ENCODE measurements at regions of chr15 and their contacts with region 1.

Region 1: DNA sequence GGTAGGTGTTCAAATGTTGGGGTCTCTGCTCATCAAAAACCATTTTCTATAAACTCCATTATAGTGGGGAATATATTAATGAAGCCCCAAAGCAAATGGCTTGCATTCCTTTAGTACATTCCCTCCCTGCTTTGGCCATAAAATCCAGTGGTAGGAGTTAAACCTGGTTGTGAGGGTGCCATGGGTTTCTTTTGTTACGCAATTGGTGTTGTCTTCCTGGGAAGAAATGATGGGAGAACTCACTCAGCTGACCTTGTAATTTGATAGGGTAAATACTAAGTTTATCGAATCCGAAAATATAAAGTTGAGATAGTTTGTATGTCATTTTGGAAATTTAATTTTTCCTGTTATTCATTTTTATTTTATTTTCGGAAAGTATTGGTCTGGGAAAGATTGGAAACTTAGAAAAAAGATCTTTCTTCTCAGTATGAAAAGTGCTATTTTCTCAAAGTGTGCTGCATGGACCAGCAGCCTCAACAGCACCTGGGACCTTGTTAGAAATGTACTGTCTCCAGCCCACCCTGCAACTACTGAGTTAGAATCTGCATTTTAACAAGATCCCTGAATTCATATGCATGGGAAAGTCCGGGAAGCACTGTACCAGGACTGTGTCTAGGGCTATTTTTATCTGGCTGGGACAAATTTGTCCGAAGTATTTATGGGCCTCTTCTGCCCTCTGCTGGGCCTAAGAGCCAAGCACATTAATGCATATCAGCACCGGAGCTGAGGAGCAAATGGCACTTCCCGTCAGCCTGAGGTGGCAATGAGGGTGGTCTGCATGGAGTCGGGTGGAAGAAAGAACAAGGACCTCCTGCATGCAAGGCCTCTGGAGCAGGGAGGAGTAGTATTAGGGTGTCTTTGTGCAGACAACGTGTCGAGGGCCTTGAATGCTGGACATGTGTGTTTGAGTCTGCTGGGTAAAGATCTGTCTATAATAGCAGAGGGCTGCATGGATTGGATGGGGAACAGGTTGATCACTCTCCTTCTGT is 54.7 kb downstream of the FAM81A start:
- DNase-seq: peak; percentile 44
- CTCF ChIP-seq: peak; percentile 86

Region 2: DNA sequence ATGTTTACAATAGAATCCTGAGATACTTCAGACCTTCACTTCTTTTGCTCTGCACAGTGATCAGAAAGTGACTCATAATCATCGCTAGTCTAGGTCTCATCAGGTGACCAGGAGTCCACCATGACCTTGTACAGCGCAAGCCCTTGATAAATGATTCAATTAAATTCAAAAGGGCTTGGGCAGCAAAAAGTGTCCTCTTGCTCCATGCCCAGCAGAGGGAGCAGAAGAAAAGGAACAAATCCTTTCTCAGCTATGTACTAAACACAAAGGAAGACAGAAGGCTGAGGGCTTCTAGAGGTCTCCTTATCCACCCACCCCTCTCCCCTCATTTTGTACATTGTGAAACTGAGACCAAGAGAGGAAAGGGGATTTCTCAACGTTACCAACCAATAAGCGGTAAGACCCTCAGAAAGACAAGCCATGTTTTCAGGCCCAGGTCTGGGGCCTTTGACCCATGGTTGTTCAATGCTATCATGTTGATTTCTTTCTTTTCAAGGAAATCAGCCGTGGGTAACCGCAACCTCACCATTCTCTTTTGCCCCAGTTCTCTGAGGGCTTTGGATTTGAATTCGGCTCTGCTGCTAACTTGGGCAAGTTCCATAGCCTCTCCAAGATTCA is 1279.7 kb before region 1 on chr15:
- in situ Hi-C with region 1: loop called (anchors 25 kb)
- DNase-seq: peak; percentile 22
- CTCF ChIP-seq: peak; percentile 17

Region 3: DNA sequence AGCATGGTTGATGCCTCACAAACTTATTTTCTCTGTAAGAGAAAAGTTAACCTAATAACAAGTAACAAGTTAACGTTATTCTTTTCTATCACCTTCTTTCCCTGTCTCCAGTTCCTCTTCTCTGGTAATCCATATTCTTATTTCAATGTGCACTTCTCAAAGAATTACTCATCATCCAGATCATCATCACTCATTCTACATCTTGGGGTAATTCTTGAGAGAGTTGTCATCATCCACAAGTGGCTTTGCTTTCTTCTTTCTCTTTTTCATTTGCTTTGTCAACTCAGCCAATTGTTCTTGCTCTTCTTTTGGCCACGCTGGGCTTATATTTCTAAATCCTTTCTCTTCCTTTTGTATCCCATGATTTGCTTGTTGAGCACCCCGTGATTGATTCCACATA is 526.0 kb before region 1 on chr15:
- in situ Hi-C with region 1: loop called (anchors 10 kb)
- DNase-seq: no peak
- CTCF ChIP-seq: no peak

Region 4: DNA sequence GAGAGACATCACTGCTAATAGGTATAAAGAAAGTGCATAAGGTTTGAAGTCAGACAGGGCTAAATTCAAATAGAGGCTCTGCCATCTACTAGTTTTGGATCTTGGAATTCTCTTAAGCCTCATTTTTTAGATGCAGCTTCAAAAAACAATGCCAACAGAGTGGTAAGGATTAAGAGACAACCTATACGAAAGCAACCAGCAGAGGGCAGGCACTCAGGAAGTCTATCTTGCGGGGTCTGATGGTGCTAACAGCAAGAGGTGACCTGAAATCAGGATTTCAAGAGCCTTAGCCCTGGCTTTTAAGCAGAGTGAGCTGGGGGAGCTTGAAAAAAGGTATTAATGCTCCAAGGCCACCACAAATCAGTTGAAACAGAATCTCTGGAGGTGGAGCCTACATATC is 245.3 kb before region 1 on chr15:
- in situ Hi-C with region 1: loop called (anchors 25 kb)
- DNase-seq: no peak
- CTCF ChIP-seq: peak; percentile 67

Region 5: GRCh38 chr15:59532770-59533379 is 40.2 kb after region 1 on chr15:
- in situ Hi-C with region 1: no loop called
- DNase-seq: peak; percentile 26
- CTCF ChIP-seq: peak; percentile 66

Region 6: DNA sequence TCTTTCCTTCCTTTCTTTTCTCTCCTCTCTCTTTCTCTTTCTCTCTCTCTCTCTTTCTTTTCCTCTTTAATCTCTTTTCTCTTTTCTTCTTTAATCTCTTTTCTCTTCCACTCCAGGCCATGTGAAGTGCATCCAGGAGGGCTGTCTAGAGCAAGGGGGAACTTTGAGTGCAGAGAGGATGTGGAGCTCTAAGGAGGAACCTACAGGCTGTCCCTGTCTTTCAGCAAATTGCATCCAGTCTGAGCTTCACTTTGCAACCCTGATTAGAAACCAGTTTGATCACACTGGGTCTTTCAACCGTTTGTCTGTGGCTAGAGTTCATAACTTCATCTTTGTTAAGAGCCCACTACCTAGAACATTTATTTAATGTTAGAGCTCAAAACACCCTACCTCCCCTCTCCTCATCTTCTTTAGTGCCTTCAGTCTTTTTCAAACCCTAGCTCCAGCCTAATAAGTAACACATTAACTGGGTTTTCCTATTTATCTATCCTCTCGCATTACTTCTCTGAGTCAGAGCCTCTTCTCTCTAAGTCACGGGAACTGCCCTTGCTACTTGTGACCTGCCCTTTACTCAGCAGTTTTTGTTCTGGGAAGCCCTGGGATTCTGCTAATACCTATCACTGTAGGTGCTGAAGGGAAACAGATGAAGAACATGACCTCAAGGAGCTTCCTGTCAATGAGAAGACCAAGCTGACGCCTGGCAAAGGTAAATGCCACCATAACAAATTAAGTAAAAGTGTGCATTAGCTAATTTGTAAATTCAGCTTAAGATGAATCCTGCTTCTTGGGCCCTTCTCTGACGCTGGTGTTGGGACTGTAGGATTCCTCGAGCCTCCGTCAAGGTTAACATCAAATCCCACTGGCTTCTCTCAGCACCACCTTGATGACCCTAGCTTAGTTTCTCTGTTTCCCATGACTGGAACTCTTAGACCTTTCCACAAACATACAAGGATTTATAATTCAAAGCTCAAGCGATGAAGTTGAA is 118.9 kb after region 1 on chr15 and contains the start of gene GCNT3:
- in situ Hi-C with region 1: no loop called
- DNase-seq: peak; percentile 23
- CTCF ChIP-seq: no peak

Measured in GM13977 (cell line).